IMR-90 (cell line): ENCODE measurements at regions of chr12 and their contacts with region 1.

Region 1: DNA sequence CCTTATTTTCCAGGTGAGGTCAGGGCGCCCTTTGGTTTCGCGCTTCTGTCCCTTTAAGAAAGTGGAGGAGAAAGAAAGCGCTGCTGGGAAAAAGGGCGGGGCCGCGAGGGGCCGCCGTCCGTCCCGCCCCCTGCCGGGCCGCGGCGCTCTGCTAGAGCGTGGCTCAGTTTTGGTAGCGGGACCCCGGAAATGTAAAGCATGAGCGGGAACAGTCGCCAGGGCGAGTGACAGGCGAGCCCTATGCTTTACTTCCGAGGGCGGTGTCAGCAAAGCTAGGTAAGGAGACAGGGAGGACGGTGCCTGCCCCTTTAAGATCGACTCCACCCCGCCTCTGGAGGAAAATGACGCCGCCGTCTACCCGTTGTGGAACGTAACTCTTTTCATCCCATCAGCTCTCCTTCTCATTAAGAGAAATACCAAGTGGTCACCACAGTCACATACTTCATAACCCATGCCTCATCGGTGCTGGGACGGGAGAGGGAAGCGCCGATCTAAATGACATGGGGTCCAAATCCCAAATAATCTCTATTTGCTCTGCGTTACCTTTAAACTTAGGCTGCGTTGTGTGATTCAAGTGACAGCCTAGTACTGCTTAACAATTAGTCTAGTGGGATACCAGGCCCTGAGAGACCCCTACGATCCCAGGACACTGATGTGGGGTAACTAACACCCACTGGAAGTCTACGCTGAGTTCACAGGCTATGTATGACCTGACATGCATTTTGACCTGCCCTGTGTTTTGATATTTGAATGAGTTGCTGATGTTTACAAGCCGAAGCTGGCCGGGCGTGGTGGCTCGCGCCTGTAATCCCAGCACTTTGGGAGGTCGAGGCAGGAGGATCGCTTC is at the start of gene ETFBKMT:
- DNase-seq: peak; percentile 70
- ATAC-seq: peak; percentile 97
- H3K4me3 ChIP-seq: peak within 1 kb of the TSS; percentile 64
- H3K27ac ChIP-seq: peak within 1 kb of the TSS; percentile 95
- H3K4me1 ChIP-seq: peaks cover 2% of the 10 kb centered on the region
- H3K27me3 ChIP-seq: no peaks in the 10 kb centered on the region
- CTCF ChIP-seq: peak; percentile 31
- POLR2A ChIP-seq: peak; percentile 42; the same call in 1 of the 2 replicates
- RAD21 ChIP-seq: peak; percentile 3; the same call in 1 of the 2 replicates
- total RNA-seq, gene ETFBKMT: 2.5 and 3.3 TPM in 2 replicates

Region 2: GRCh38 chr12:31440586-31440985 is 218.7 kb before region 1 on chr12:
- CTCF ChIA-PET with region 1: no interaction called
- POLR2A ChIA-PET with region 1: no interaction called
- dilution Hi-C with region 1: no loop called
- in situ Hi-C with region 1: no loop called
- intact Hi-C with region 1: no loop called
- DNase-seq: no peak
- ATAC-seq: no peak
- H3K4me3 ChIP-seq: no peak overlapping the region
- H3K27ac ChIP-seq: no peak overlapping the region
- H3K4me1 ChIP-seq: no peaks in the 10 kb centered on the region
- H3K27me3 ChIP-seq: no peaks in the 10 kb centered on the region
- CTCF ChIP-seq: no peak
- POLR2A ChIP-seq: no peak
- RAD21 ChIP-seq: no peak

Region 3: GRCh38 chr12:32051559-32052414 is 392.5 kb after region 1 on chr12:
- CTCF ChIA-PET with region 1: interaction called, 5 read pairs
- POLR2A ChIA-PET with region 1: no interaction called
- dilution Hi-C with region 1: no loop called
- in situ Hi-C with region 1: loop called (anchors 25 kb)
- intact Hi-C with region 1: loop called (anchors 10 kb)
- DNase-seq: peak; percentile 96
- ATAC-seq: peak; percentile 95
- H3K4me3 ChIP-seq: no peak overlapping the region
- H3K27ac ChIP-seq: peak overlapping the region; percentile 4; the same call in 1 of the 2 replicates
- H3K4me1 ChIP-seq: peaks cover 7% of the 10 kb centered on the region
- H3K27me3 ChIP-seq: no peaks in the 10 kb centered on the region
- CTCF ChIP-seq: no peak
- POLR2A ChIP-seq: no peak
- RAD21 ChIP-seq: peak; percentile 12; the same call in 1 of the 2 replicates

Region 4: DNA sequence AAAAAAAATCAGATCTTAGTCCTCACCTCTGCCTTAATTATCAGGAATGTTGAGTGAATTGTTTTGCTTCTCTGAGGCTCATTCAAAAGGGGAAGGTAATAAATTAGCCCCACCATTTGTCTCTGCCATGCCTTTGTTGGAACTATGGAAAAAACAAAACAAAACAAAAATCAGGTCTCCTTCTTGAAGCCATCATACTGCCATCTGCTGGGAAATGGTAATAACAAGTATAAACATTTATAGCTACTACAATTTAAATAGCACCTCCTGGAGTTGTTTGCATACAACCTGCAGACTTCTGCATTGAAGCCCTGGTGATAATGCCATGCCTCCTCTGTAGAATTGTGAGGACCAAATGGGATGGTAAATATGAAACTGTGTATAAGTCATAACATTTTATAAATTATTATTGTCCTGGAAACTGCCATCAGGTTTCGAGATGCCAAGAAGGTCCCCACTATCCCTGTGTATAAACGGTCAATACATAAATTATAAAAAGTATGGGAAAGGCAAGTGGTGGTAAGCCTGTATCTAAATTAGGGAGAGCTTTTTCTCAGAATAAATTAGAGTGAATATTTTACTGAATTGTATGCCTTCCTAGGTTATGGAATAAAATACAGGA is 652.9 kb after region 1 on chr12:
- CTCF ChIA-PET with region 1: interaction called, 4 read pairs
- POLR2A ChIA-PET with region 1: no interaction called
- dilution Hi-C with region 1: no loop called
- in situ Hi-C with region 1: loop called (anchors 10 kb)
- intact Hi-C with region 1: loop called (anchors 2 kb)
- DNase-seq: peak; percentile 72
- ATAC-seq: peak; percentile 76
- H3K4me3 ChIP-seq: no peak overlapping the region
- H3K27ac ChIP-seq: no peak overlapping the region
- H3K4me1 ChIP-seq: peaks cover 2% of the 10 kb centered on the region; the same call in 1 of the 2 replicates
- H3K27me3 ChIP-seq: no peaks in the 10 kb centered on the region
- CTCF ChIP-seq: peak; percentile 69
- POLR2A ChIP-seq: no peak
- RAD21 ChIP-seq: peak; percentile 59

Region 5: DNA sequence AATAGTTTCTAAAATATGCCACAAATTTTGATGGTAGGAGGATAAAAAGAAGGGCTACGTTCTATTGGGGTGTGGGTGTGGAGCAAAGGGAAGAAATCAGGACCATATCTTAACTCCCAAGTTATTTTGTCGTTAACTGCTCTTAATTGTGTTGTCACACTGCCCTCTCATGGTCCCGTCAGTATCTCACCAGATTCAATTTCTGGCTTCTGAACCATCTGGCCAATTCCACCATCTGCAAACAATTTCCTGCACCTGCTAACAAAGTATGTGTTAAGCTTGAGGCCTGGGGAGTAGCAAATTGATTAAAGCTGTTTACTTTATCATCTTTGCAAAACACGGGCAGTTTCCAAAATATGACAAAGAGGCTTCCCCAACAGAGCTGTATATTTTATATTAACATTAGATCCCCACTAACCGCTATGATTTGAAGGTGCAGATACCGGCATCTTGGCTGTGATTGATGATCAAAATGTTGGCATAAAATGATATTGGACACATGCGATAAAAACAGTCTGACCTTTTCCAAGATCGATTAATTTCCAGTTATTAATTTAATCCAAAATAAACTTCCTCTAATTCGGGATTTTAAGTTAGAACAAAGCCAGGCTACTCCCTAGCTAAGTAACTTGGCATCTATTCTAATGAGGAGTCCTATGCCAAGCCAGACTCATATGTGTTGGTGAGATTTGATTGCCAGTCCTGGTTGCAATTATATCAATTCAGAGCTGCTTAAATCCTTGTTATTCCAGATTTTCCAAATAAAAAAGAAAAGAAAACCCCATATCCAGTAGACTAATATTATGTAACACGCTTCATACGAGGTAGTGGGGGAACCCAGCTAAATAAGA is 1012.8 kb after region 1 on chr12:
- CTCF ChIA-PET with region 1: no interaction called
- POLR2A ChIA-PET with region 1: no interaction called
- dilution Hi-C with region 1: no loop called
- in situ Hi-C with region 1: loop called (anchors 25 kb)
- intact Hi-C with region 1: loop called (anchors 5 kb)
- DNase-seq: peak; percentile 83
- ATAC-seq: peak; percentile 92
- H3K4me3 ChIP-seq: no peak overlapping the region
- H3K27ac ChIP-seq: no peak overlapping the region
- H3K4me1 ChIP-seq: no peaks in the 10 kb centered on the region
- H3K27me3 ChIP-seq: no peaks in the 10 kb centered on the region
- CTCF ChIP-seq: peak; percentile 77
- POLR2A ChIP-seq: no peak
- RAD21 ChIP-seq: peak; percentile 83

Region 6: DNA sequence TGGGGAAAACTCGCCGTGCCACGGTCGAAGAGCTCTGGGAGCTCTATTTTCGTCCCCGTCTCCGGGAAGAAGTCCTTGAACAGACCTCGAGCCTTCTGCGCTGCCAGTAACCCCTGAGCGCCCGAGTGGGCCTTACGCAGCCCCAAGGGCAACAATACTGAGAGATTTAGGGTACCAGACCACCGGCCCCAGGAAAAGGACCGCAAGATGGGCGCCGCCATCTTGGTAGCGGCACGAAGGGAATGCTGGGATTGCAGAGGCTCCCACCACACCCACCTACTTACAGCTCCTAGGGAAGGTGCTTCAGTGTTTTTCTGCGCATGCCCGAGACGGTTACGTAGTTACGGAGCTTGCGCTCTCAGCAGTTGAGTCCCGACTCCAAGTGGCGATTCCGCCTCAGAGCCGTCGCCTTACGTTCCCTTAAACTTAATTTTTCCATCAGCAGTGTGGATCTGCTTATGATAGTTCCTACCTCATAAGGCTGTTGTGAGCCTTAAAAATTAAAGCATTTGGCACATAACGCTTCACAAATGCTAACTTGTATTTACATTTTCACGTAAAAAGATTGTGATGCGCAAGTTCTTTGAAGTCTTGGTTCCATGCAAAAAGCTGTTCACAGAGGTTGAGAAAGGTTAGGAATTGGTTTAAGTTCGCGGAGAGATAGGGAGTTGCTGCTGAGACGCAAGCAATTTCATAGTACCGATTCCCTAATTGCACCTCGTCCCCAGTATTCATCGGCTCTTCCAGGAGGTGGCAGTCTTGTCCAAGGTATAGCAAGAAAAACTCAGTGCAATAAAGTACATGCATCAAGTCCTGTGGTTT is 1096.6 kb after region 1 on chr12 and contains the start of gene YARS2:
- CTCF ChIA-PET with region 1: no interaction called
- POLR2A ChIA-PET with region 1: no interaction called
- dilution Hi-C with region 1: no loop called
- in situ Hi-C with region 1: no loop called
- intact Hi-C with region 1: loop called (anchors 10 kb)
- DNase-seq: peak; percentile 99
- ATAC-seq: peak; percentile 96
- H3K4me3 ChIP-seq: peak within 1 kb of the TSS; percentile 76
- H3K27ac ChIP-seq: peak within 1 kb of the TSS; percentile 78
- H3K4me1 ChIP-seq: peaks cover 5% of the 10 kb centered on the region; the same call in 1 of the 2 replicates
- H3K27me3 ChIP-seq: no peaks in the 10 kb centered on the region
- CTCF ChIP-seq: peak; percentile 92
- POLR2A ChIP-seq: peak; percentile 95
- RAD21 ChIP-seq: peak; percentile 93
- total RNA-seq, gene YARS2: 21.9 and 26.9 TPM in 2 replicates